ENCODE measurements at regions of chr7 and their contacts with region 1.

Region 1: GRCh38 chr7:129969807-129970446 is 17.2 kb upstream of the UBE2H start:
- DNase-seq: peak; percentile 96
- H3K4me3 ChIP-seq: no peak overlapping the region
- H3K27ac ChIP-seq: peak overlapping the region; percentile 99
- H3K4me1 ChIP-seq: peaks cover 22% of the 10 kb centered on the region
- H3K27me3 ChIP-seq: no peaks in the 10 kb centered on the region
- CTCF ChIP-seq: no peak
- POLR2A ChIP-seq: no peak

Region 2: DNA sequence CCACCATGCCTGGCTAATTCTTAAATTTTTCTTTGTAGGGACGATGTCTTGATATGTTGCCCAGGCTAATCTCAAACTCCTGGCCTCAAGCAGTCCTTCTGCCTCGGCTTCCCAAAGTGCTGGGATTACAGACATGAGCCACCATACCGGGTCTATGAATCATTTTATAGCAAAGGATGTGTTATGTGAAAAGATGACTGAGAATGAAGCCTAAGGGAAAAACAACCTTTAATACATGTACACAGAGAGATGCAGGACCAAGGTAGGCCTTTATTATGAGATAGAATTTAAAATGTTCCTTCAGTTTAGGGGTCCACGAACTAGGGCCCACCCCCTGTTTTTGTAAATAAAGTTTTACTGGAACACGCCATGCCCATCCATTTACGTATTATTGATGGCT is 58.1 kb before region 1 on chr7:
- CTCF ChIA-PET with region 1: no interaction called
- POLR2A ChIA-PET with region 1: no interaction called
- dilution Hi-C with region 1: no loop called
- intact Hi-C with region 1: no loop called
- DNase-seq: no peak
- H3K4me3 ChIP-seq: no peak overlapping the region
- H3K27ac ChIP-seq: no peak overlapping the region
- H3K4me1 ChIP-seq: peaks cover 26% of the 10 kb centered on the region
- H3K27me3 ChIP-seq: no peaks in the 10 kb centered on the region
- CTCF ChIP-seq: no peak
- POLR2A ChIP-seq: no peak

Region 3: DNA sequence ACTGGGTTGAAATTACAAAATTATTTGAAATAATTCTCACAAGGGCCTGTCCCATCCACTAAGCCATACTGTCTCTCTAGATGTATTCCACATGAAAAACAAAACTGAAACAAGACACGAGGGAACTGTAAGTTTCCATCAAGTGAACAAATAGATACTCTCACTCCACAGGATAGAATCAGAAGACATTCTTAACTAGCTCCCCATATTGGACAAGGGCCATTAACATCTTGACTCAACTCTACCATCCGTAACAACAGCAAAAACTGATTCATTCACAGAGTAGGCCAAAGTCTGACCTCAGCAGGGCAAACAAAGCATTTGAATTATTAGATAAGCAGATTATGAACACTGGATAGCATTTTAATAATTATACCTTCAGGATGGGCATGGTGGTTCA is 46.2 kb before region 1 on chr7:
- CTCF ChIA-PET with region 1: interaction called, 3 read pairs
- POLR2A ChIA-PET with region 1: interaction called, 12 read pairs
- dilution Hi-C with region 1: no loop called
- intact Hi-C with region 1: no loop called
- DNase-seq: peak; percentile 81
- H3K4me3 ChIP-seq: no peak overlapping the region
- H3K27ac ChIP-seq: peak overlapping the region; percentile 37
- H3K4me1 ChIP-seq: peaks cover 30% of the 10 kb centered on the region
- H3K27me3 ChIP-seq: no peaks in the 10 kb centered on the region
- CTCF ChIP-seq: no peak
- POLR2A ChIP-seq: no peak

Region 4: DNA sequence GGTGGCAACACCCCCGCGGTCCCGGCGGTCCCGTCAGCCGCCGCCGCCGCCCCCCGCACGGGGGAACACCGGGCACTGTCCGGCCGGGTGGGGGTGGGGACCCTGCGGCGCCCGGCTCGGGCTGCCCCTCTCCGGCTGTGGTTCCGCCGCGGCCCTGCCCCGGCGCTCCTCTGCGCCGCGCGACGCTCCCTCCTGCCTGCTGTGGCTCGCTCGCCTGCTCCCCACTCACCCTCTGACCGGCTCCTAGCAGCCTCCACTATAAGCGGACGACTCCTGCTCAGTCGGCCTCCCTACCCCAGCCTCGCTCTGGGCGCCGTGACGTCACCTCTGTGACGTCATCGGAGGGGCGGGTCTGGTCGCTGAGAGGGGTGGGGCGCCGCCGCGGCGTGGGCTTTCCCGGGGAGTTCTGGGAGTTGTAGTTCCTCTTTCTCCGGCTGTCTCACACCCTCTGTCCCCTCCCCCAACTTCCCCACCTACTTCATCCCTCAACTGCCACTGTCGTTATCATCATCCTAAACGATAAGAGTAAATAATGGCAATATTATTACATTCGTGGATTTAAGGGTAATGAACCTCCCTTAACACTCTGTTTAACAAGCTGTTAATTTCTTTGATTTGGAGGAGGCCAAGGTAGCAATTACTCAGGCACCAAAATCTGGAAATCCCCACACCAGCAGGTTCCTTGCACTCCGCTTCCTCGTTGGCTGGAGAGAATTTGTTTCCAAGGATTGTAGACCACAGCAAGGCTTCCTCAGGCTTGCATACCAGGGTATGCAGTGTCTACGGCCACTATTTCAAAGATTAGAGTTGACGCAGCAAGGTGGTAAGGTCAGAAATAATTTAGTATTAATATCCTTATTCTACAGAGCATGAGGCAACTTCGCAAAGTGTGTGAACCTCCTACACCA is 17.0 kb before region 1 on chr7 and contains the start of gene UBE2H:
- CTCF ChIA-PET with region 1: interaction called, 15 read pairs
- POLR2A ChIA-PET with region 1: interaction called, 9 read pairs
- dilution Hi-C with region 1: no loop called
- intact Hi-C with region 1: loop called (anchors 1 kb)
- DNase-seq: peak; percentile 92
- H3K4me3 ChIP-seq: peak within 1 kb of the TSS; percentile 73 to 99 (median 91)
- H3K27ac ChIP-seq: peak within 1 kb of the TSS; percentile 97
- H3K4me1 ChIP-seq: peaks cover 23% of the 10 kb centered on the region
- H3K27me3 ChIP-seq: no peaks in the 10 kb centered on the region
- CTCF ChIP-seq: no peak
- POLR2A ChIP-seq: peak; percentile 90
- total RNA-seq, gene UBE2H: 82.2 and 90.1 TPM in 2 replicates

Region 5: GRCh38 chr7:129958643-129959470 is 11.1 kb before region 1 on chr7:
- CTCF ChIA-PET with region 1: interaction called, 5 read pairs
- POLR2A ChIA-PET with region 1: interaction called, 18 read pairs
- dilution Hi-C with region 1: no loop called
- intact Hi-C with region 1: loop called (anchors 1 kb)
- DNase-seq: peak; percentile 98
- H3K4me3 ChIP-seq: no peak overlapping the region
- H3K27ac ChIP-seq: peak overlapping the region; percentile 88
- H3K4me1 ChIP-seq: peaks cover 17% of the 10 kb centered on the region
- H3K27me3 ChIP-seq: no peaks in the 10 kb centered on the region
- CTCF ChIP-seq: no peak
- POLR2A ChIP-seq: peak; percentile 61

Region 6: GRCh38 chr7:130124711-130125110 is 154.8 kb after region 1 on chr7:
- CTCF ChIA-PET with region 1: no interaction called
- POLR2A ChIA-PET with region 1: no interaction called
- dilution Hi-C with region 1: no loop called
- intact Hi-C with region 1: no loop called
- DNase-seq: no peak
- H3K4me3 ChIP-seq: no peak overlapping the region
- H3K27ac ChIP-seq: no peak overlapping the region
- H3K4me1 ChIP-seq: no peaks in the 10 kb centered on the region
- H3K27me3 ChIP-seq: no peaks in the 10 kb centered on the region
- CTCF ChIP-seq: no peak
- POLR2A ChIP-seq: no peak